Right lobe of liver (tissue), 6 donors: ENCODE measurements at regions of chr12 and their contacts with region 1.

Region 1: DNA sequence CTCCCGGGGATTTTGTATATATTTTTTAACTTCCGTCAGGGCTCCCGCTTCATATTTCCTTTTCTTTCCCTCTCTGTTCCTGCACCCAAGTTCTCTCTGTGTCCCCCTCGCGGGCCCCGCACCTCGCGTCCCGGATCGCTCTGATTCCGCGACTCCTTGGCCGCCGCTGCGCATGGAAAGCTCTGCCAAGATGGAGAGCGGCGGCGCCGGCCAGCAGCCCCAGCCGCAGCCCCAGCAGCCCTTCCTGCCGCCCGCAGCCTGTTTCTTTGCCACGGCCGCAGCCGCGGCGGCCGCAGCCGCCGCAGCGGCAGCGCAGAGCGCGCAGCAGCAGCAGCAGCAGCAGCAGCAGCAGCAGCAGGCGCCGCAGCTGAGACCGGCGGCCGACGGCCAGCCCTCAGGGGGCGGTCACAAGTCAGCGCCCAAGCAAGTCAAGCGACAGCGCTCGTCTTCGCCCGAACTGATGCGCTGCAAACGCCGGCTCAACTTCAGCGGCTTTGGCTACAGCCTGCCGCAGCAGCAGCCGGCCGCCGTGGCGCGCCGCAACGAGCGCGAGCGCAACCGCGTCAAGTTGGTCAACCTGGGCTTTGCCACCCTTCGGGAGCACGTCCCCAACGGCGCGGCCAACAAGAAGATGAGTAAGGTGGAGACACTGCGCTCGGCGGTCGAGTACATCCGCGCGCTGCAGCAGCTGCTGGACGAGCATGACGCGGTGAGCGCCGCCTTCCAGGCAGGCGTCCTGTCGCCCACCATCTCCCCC is 777 bp downstream of the ASCL1 start:
- DNase-seq: peak in 1 of 3 donors; percentile 46
- ATAC-seq: peak; percentile 17 to 46 (median 32)
- H3K4me3 ChIP-seq: peak overlapping the region; percentile 30 to 56 (median 55)
- H3K27ac ChIP-seq: no peak overlapping the region
- H3K4me1 ChIP-seq: peaks cover 0 to 25% (median 3%) of the 10 kb centered on the region in 4 donors
- H3K27me3 ChIP-seq: peaks cover 0 to 5% of the 10 kb centered on the region in 2 donors
- CTCF ChIP-seq: peak in 1 of 4 donors; percentile 8
- POLR2A ChIP-seq: no peak

Region 2: GRCh38 chr12:103114296-103115055 is 156.2 kb after region 1 on chr12:
- intact Hi-C with region 1: loop called in 1 of 2 experiments (anchors 10 kb)
- DNase-seq: peak in 1 of 3 donors; percentile 21
- ATAC-seq: peak; percentile 76 to 84 (median 78)
- H3K4me3 ChIP-seq: no peak overlapping the region
- H3K27ac ChIP-seq: peak overlapping the region; percentile 26 to 47 (median 47)
- H3K4me1 ChIP-seq: peaks cover 0 to 11% (median 4%) of the 10 kb centered on the region in 4 donors
- H3K27me3 ChIP-seq: no peaks in the 10 kb centered on the region
- CTCF ChIP-seq: no peak
- POLR2A ChIP-seq: no peak

Region 3: GRCh38 chr12:103178366-103179080 is 220.3 kb after region 1 on chr12:
- intact Hi-C with region 1: loop called in 1 of 2 experiments (anchors 10 kb)
- DNase-seq: no peak
- ATAC-seq: no peak
- H3K4me3 ChIP-seq: no peak overlapping the region
- H3K27ac ChIP-seq: no peak overlapping the region
- H3K4me1 ChIP-seq: peaks cover 0 to 26% (median 14%) of the 10 kb centered on the region in 4 donors
- H3K27me3 ChIP-seq: no peaks in the 10 kb centered on the region
- CTCF ChIP-seq: no peak
- POLR2A ChIP-seq: no peak